Dorsolateral prefrontal cortex (tissue), 120 donors: ENCODE measurements at regions of chr12 and their contacts with region 1.

Region 1: GRCh38 chr12:6937481-6938297 is 5.9 kb upstream of the RNU7-1 start:
- DNase-seq: peak; percentile 84 to 96 (median 94)
- H3K4me3 ChIP-seq: peak overlapping the region; percentile 59 to 95 (median 82)
- H3K27ac ChIP-seq: peak overlapping the region; percentile 83 to 100 (median 99)
- H3K27me3 ChIP-seq: no peaks in the 10 kb centered on the region
- CTCF ChIP-seq: peak; percentile 93 to 99 (median 98)

Region 2: GRCh38 chr12:6745741-6746525 is 191.8 kb before region 1 on chr12:
- intact Hi-C with region 1: no loop called
- DNase-seq: no peak
- H3K4me3 ChIP-seq: no peak overlapping the region
- H3K27ac ChIP-seq: peak overlapping the region in 10 of 59 donors; percentile 5 to 51 (median 22)
- H3K27me3 ChIP-seq: no peaks in the 10 kb centered on the region
- CTCF ChIP-seq: no peak

Region 3: DNA sequence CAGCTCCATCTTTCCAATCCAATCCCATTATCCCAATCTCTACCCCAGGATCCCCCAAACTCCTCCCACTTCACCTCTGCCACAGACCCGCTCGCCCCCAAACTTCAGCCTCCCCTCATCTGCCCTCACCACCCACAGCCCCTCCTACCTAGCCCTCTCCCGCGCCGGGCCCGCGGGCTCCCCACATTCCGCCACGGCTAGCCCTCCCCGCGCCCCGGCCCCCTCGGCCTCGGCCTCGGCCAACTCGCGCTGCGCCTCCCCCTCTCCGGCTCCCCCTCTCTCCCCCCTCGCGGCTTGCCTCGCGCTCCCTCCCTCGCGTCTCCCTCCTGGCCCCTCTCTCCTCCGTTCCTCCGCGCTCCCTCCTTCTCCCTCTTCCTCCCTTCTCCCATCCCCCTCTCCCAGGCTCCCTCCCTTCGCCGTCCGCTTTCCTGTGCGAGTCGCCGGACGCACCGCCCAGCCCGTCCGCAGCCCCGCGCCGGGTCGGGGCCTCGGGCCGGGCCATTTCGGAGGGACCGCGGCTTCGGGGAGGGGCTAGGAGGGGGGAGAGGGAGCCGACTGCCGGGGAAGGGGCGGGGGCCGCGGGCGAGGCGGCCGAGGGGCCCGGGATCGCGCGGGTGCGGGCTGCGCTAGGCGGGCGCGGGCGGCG is 10.2 kb before region 1 on chr12 and contains the start of gene ATN1:
- intact Hi-C with region 1: loop called in 1 of 2 experiments (anchors 2 kb)
- DNase-seq: peak in 9 of 10 donors; percentile 55 to 86 (median 79)
- H3K4me3 ChIP-seq: peak within 1 kb of the TSS; percentile 58 to 89 (median 78)
- H3K27ac ChIP-seq: peak within 1 kb of the TSS; percentile 82 to 98 (median 95)
- H3K27me3 ChIP-seq: no peaks in the 10 kb centered on the region
- CTCF ChIP-seq: peak in 1 of 56 donors; percentile 24
- total RNA-seq, gene ATN1: 147 to 334 (median 199) TPM